GM23248 (cell line): ENCODE measurements at regions of chr3 and their contacts with region 1.

Region 1: GRCh38 chr3:13495921-13496723 is 16.0 kb downstream of the HDAC11 start:
- DNase-seq: peak; percentile 97
- H3K4me3 ChIP-seq: no peak overlapping the region
- H3K27ac ChIP-seq: peak overlapping the region; percentile 71
- H3K4me1 ChIP-seq: peaks cover 22% of the 10 kb centered on the region
- H3K27me3 ChIP-seq: no peaks in the 10 kb centered on the region

Region 2: GRCh38 chr3:13648060-13649001 is 152.2 kb after region 1 on chr3:
- in situ Hi-C with region 1: loop called (anchors 5 kb)
- DNase-seq: peak; percentile 89
- H3K4me3 ChIP-seq: peak overlapping the region; percentile 61
- H3K27ac ChIP-seq: peak overlapping the region; percentile 62
- H3K4me1 ChIP-seq: peaks cover 20% of the 10 kb centered on the region
- H3K27me3 ChIP-seq: no peaks in the 10 kb centered on the region